Tibial artery (tissue), 4 donors: ENCODE measurements at regions of chr9 and their contacts with region 1.

Region 1: DNA sequence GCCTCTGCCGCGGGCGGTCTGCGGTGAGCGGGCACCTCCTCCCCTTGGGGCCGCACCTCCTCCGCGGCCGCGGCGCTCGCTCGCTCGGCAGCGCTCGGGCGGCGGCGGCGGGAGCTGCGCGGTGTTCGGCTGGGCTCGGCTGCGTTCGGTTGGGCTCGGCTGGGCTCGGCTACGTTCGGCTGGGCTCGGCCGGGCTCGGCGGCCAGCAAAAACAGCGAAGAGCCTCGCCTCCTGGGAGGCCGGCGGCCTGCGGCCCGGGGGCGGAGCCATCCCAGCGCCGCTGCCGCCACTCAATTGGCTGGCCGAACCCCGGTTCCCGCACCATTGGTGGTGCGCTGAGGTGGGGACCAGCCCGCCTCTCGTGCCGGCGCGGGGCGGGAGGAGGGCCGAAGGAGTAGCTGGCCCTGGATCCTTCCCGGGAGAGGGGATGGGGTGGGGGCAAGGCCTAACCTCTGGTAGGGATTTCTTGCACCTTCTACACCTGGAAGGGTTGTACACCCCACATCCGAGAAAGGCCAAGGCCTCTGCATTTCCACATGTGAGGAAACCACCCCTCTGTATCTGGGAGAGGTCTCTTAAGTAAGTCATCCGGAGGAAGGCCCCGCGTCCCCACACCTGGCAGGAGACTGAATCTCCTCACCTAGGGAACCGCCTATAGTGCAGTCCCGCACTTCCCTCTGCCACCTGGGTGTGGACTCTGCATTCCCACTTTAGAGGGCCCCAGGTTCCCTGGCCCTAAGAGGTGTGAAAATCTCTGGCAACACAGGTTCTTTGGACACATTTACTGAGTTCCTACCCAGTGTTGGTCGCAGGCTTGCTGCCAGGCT is at the start of gene ENHO:
- DNase-seq: peak; percentile 81 to 93
- H3K4me3 ChIP-seq: peak within 1 kb of the TSS; percentile 44 to 54
- H3K27ac ChIP-seq: peak within 1 kb of the TSS; percentile 10 to 38
- H3K4me1 ChIP-seq: peaks cover 0 to 15% (median 8%) of the 10 kb centered on the region in 4 donors
- H3K27me3 ChIP-seq: peaks cover 0 to 5% of the 10 kb centered on the region in 2 donors
- CTCF ChIP-seq: no peak

Region 2: GRCh38 chr9:34458013-34458958 is 64.9 kb before region 1 on chr9 and contains the starts of genes DNAI1 and FAM219A:
- intact Hi-C with region 1: loop called (anchors 5 kb)
- DNase-seq: peak; percentile 98 to 99
- H3K4me3 ChIP-seq: peak within 1 kb of the TSS; percentile 66 to 81
- H3K27ac ChIP-seq: peak within 1 kb of the TSS; percentile 67 to 81
- H3K4me1 ChIP-seq: peaks cover 0 to 41% (median 22%) of the 10 kb centered on the region in 4 donors
- H3K27me3 ChIP-seq: no peaks in the 10 kb centered on the region
- CTCF ChIP-seq: no peak